Activated naive CD4-positive, alpha-beta T cell treated with anti-CD3 and anti-CD28 coated beads, Interleukin-2, amount 10 ng/mL, durations not matched to agents 7 days and 5 days (primary cell): ENCODE measurements at regions of chr20 and their contacts with region 1.

Region 1: GRCh38 chr20:20017001-20017843 is at the start of gene NAA20:
- DNase-seq: peak; percentile 95
- H3K4me3 Mint-ChIP-seq: peak within 1 kb of the TSS; percentile 88
- H3K27ac Mint-ChIP-seq: peak within 1 kb of the TSS; percentile 87
- H3K4me1 Mint-ChIP-seq: peaks cover 57% of the 10 kb centered on the region
- H3K27me3 Mint-ChIP-seq: peaks cover 8% of the 10 kb centered on the region

Region 2: GRCh38 chr20:19974626-19975435 is 42.4 kb before region 1 on chr20:
- CTCF ChIA-PET with region 1: no interaction called
- DNase-seq: no peak
- H3K4me3 Mint-ChIP-seq: no peak overlapping the region
- H3K27ac Mint-ChIP-seq: no peak overlapping the region
- H3K4me1 Mint-ChIP-seq: peaks cover 10% of the 10 kb centered on the region
- H3K27me3 Mint-ChIP-seq: peaks cover 14% of the 10 kb centered on the region

Region 3: GRCh38 chr20:20052074-20052970 is 35.1 kb after region 1 on chr20 and contains the starts of genes CFAP61 and CRNKL1:
- CTCF ChIA-PET with region 1: interaction called, 12 read pairs
- DNase-seq: peak; percentile 98
- H3K4me3 Mint-ChIP-seq: peak within 1 kb of the TSS; percentile 96
- H3K27ac Mint-ChIP-seq: peak within 1 kb of the TSS; percentile 96
- H3K4me1 Mint-ChIP-seq: peaks cover 22% of the 10 kb centered on the region
- H3K27me3 Mint-ChIP-seq: peaks cover 5% of the 10 kb centered on the region

Region 4: DNA sequence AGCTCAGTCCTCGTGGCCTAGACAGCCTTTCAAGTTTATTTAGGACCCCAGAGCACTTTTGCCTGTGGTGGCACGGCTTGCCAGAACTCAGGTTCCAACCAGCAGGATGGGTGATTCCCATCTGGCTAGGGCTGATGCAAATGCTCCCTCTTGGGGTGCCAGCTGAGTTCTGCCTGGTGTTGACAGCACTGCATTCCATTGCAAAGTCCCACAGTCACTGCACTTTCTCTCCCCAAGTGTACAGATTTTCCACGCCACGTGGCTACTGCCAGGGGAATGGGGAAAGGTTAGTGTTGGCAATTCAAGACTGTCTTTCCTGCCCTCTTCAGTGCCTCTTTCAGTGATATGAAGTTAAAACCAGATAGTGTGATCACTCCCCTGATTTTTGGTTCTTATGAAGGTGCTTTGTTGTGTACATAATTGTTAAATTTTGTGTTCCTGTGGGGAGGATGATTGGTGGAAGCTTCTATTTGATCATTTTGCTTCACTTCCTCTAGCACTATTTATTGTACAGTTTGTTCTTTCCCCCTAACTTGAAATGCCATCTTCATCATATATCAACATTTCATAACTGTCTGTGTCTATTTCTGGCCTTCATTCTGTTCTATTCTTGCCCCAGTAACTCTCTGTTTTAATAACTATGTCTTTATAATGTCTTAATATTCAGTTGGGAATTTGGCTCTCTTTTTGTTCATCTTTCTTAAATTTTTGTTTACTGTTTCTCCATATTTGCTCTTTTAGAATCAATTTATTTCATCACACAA is 121.3 kb after region 1 on chr20:
- CTCF ChIA-PET with region 1: no interaction called
- DNase-seq: no peak
- H3K4me3 Mint-ChIP-seq: no peak overlapping the region
- H3K27ac Mint-ChIP-seq: no peak overlapping the region
- H3K4me1 Mint-ChIP-seq: no peaks in the 10 kb centered on the region
- H3K27me3 Mint-ChIP-seq: no peaks in the 10 kb centered on the region